PC-3 (cell line): ENCODE measurements at regions of chr9 and their contacts with region 1.

Region 1: GRCh38 chr9:2849941-2850340 is 6.0 kb upstream of the PUM3 start:
- DNase-seq: no peak
- ATAC-seq: no peak
- H3K4me3 ChIP-seq: no peak overlapping the region
- H3K27ac ChIP-seq: no peak overlapping the region
- H3K4me1 ChIP-seq: 0 out of 2 replicates have a peak, but pooled peaks cover 5% of the 10 kb centered on the region
- H3K27me3 ChIP-seq: no peaks in the 10 kb centered on the region; the same call in 1 of the 2 replicates
- CTCF ChIP-seq: no peak

Region 2: DNA sequence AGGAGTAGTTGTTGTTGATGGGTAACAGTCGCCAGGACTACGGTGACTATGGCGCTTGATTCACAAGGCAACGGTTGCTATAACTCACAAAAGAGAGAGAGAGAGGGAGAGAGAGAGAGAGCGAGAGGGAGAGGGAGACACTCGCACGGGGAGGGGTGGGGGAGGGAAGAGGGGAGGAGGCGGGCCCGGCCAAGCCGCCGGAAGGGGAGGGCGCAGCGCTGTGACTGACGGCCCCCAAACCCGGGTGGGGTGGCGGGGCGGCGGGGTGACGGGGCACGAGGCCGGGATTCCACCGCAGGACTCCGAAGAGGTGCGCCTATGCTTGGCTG is 675.9 kb after region 1 on chr9 and contains the start of gene RFX3:
- CTCF ChIA-PET with region 1: no interaction called
- POLR2A ChIA-PET with region 1: no interaction called
- intact Hi-C with region 1: loop called (anchors 10 kb)
- DNase-seq: peak; percentile 79
- ATAC-seq: peak; percentile 66
- H3K4me3 ChIP-seq: peak within 1 kb of the TSS; percentile 82
- H3K27ac ChIP-seq: peak within 1 kb of the TSS; percentile 100
- H3K4me1 ChIP-seq: peaks cover 11% of the 10 kb centered on the region; the same call in 1 of the 2 replicates
- H3K27me3 ChIP-seq: no peaks in the 10 kb centered on the region
- CTCF ChIP-seq: no peak
- total RNA-seq, gene RFX3: 2.3 and 4.5 TPM in 2 replicates